Activated CD4-positive, alpha-beta T cell treated with anti-CD3 and anti-CD28 coated beads, Interleukin-2, amount 10 ng/mL, durations not matched to agents 7 days and 5 days (primary cell): ENCODE measurements at regions of chr2 and their contacts with region 1.

Region 1: DNA sequence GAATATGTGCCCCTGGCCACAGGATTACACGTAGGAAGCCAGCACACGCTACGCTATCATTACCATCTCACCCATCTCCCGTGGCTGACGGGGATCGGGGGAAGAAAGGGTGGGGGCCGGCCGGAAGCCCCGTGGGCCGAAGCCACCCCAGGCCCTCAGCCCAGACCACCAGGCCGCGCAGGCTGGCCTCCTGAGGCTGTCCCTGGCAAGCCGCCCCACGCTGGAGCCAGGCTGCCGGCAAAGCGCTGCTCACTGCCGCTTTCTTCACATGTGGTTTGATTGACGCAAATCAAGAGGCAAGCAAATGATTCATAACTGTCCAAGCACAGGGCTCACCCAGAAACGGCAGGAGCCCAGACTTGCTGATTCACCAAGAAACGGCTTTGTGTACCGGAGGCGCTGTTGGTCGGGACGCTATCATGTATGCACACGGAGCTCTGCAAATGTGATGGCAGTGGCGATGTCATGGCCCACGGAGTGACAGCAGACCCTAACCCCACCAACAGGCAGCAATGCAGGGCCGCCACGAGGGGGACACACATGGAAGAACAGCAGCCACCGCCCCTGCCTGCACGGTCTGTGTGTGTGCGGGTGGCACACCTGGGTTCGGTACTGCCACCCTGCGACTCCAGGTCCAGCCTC is 125.7 kb downstream of the HDAC4 start:
- DNase-seq: peak; percentile 86
- H3K4me3 Mint-ChIP-seq: peak overlapping the region; percentile 60
- H3K27ac Mint-ChIP-seq: peak overlapping the region; percentile 93
- H3K4me1 Mint-ChIP-seq: peaks cover 69% of the 10 kb centered on the region
- H3K27me3 Mint-ChIP-seq: peaks cover 6% of the 10 kb centered on the region

Region 2: DNA sequence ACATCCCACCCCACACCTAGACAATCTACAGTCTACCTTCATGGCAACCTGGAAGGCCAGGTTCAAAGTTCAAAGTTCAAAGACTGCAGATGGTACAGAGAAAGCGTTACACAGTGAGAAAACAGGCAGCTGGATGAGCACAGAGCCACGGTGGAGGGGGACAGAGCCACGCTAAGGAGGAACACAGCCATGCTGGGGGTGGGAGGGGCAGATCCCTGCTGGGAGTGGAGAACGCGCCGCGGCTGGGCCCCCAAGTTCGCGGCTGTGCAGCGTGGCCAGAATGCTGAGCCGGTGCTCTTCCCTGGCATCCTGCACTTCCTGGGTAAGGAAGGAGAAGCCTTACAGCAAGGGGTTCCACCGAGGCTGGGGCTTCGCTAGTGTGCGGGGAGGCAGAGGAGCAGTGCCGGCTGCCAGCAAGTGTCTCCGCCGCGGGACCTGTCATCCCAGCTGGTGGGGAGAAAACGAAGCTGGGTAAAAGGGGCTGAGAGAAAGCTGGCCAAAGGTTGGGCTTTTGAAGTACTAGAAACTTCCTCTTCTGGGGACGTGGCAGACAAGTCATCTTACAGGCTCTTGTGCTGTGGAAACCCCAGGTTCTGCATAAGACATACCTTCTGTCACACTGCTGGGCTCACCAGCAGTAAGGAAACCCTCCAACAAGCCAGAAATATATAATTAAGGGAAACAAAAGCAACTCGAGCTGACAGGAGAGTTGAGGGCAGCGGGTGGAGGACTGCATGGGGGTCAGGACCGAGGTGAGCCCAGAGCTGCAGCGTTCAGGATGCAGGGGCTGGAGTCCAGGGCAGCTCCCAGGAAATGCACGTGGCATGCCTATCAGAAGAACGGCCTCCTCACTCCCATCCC is 10.1 kb after region 1 on chr2:
- CTCF ChIA-PET with region 1: interaction called, 12 read pairs
- POLR2A ChIA-PET with region 1: no interaction called
- DNase-seq: peak; percentile 45
- H3K4me3 Mint-ChIP-seq: peak overlapping the region; percentile 69
- H3K27ac Mint-ChIP-seq: peak overlapping the region; percentile 87
- H3K4me1 Mint-ChIP-seq: peaks cover 67% of the 10 kb centered on the region
- H3K27me3 Mint-ChIP-seq: no peaks in the 10 kb centered on the region

Region 3: GRCh38 chr2:239293775-239294430 is 18.7 kb after region 1 on chr2:
- CTCF ChIA-PET with region 1: interaction called, 13 read pairs
- POLR2A ChIA-PET with region 1: no interaction called
- DNase-seq: peak; percentile 37
- H3K4me3 Mint-ChIP-seq: peak overlapping the region; percentile 64
- H3K27ac Mint-ChIP-seq: peak overlapping the region; percentile 79
- H3K4me1 Mint-ChIP-seq: peaks cover 89% of the 10 kb centered on the region
- H3K27me3 Mint-ChIP-seq: no peaks in the 10 kb centered on the region

Region 4: GRCh38 chr2:239594019-239594772 is 319.0 kb after region 1 on chr2:
- CTCF ChIA-PET with region 1: no interaction called
- POLR2A ChIA-PET with region 1: no interaction called
- DNase-seq: no peak
- H3K4me3 Mint-ChIP-seq: no peak overlapping the region
- H3K27ac Mint-ChIP-seq: no peak overlapping the region
- H3K4me1 Mint-ChIP-seq: no peaks in the 10 kb centered on the region
- H3K27me3 Mint-ChIP-seq: no peaks in the 10 kb centered on the region